ENCODE measurements at regions of chr10 and their contacts with region 1.

Region 1: GRCh38 chr10:3881636-3882035 is 96.6 kb upstream of the KLF6 start:
- DNase-seq: peak; percentile 74 to 80
- H3K4me3 ChIP-seq: no peak overlapping the region
- H3K4me3 Mint-ChIP-seq: peak overlapping the region; percentile 48
- H3K27ac Mint-ChIP-seq: peak overlapping the region; percentile 80
- H3K4me1 ChIP-seq: peaks cover 44% of the 10 kb centered on the region
- H3K4me1 Mint-ChIP-seq: peaks cover 48% of the 10 kb centered on the region
- H3K27me3 ChIP-seq: no peaks in the 10 kb centered on the region
- H3K27me3 Mint-ChIP-seq: no peaks in the 10 kb centered on the region
- CTCF ChIP-seq: no peak

Region 2: DNA sequence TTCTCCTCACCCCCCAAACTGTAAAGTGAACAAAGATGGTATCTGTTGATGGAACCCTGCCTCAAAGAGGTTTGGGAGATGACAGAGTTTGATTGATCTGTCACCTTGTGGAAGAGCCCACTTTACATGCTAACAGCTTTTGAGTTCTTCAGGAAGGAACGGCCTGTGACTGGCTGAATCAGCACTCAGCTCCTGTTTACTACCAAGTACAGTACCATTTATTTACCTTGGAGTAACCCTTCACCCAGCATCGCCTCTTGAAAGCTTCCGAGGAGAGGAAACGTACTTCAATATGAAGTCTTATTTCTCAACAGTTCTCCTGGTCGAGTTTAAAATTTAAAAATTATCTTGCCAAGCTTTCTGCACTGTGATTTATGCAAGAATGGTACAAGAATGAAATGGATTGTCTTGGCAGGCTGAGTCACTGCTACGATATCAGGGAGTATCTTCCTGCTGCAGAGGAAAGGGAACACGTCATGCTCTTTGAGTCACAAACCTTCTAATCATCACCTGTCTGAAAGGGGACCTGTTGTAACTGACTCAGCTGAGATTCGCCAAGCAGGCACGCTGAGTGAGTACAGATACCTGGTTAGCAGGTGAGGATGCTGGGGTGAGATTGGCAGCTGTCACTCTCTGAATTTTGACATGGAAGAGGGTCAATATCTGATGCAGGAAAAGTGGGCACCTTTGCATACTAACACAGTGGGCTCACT is 126.8 kb before region 1 on chr10:
- CTCF ChIA-PET with region 1: no interaction called
- POLR2A ChIA-PET with region 1: no interaction called
- intact Hi-C with region 1: loop called (anchors 2 kb)
- DNase-seq: peak; percentile 64 to 76
- H3K4me3 ChIP-seq: no peak overlapping the region
- H3K4me3 Mint-ChIP-seq: peak overlapping the region; percentile 60
- H3K27ac Mint-ChIP-seq: peak overlapping the region; percentile 91
- H3K4me1 ChIP-seq: peaks cover 64% of the 10 kb centered on the region
- H3K4me1 Mint-ChIP-seq: peaks cover 49% of the 10 kb centered on the region
- H3K27me3 ChIP-seq: no peaks in the 10 kb centered on the region
- H3K27me3 Mint-ChIP-seq: no peaks in the 10 kb centered on the region
- CTCF ChIP-seq: no peak

Region 3: DNA sequence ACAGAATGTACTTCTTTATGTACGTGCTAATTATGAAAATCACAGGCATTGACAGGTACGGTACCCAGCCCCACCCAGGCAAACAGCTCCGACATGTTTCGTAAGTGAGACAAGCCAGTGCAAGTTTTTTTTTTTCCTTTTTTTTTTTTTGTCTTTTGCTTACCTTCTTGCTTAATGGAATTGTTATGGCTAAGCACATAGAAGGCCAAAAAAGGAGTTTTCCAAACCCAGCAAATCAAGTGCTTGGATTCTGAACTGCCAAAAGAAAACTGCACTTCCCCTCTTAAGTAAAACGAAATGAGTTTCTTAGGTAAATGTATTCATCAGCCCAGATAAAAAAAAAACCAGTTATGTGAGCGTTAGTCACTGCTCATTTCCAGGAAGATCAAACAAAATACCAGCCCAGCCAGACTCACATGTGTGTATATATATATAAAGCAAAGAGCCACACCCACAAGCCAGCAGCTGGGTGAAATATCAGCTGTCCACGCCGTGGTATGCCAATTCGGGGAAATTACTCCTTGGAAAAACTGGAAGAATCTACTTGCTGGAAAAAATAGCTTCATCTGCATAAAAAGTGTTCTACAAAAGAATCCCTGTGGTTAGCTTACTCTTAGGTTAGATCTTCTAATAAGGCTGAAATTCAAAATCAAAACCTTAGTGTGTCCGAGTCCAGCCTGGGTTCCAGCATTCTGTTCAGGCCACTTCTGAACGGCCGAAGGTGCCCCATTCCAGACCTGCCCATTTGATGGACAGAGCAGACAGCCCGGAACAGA is 104.7 kb before region 1 on chr10:
- CTCF ChIA-PET with region 1: no interaction called
- POLR2A ChIA-PET with region 1: no interaction called
- intact Hi-C with region 1: no loop called
- DNase-seq: peak; percentile 80 to 84
- H3K4me3 ChIP-seq: no peak overlapping the region
- H3K4me3 Mint-ChIP-seq: peak overlapping the region; percentile 17
- H3K27ac Mint-ChIP-seq: peak overlapping the region; percentile 48
- H3K4me1 ChIP-seq: peaks cover 69% of the 10 kb centered on the region
- H3K4me1 Mint-ChIP-seq: peaks cover 47% of the 10 kb centered on the region
- H3K27me3 ChIP-seq: no peaks in the 10 kb centered on the region
- H3K27me3 Mint-ChIP-seq: no peaks in the 10 kb centered on the region
- CTCF ChIP-seq: no peak

Region 4: GRCh38 chr10:3902054-3902808 is 20.6 kb after region 1 on chr10:
- CTCF ChIA-PET with region 1: no interaction called
- POLR2A ChIA-PET with region 1: no interaction called
- intact Hi-C with region 1: no loop called
- DNase-seq: no peak
- H3K4me3 ChIP-seq: no peak overlapping the region
- H3K4me3 Mint-ChIP-seq: no peak overlapping the region
- H3K27ac Mint-ChIP-seq: no peak overlapping the region
- H3K4me1 ChIP-seq: peaks cover 7% of the 10 kb centered on the region
- H3K4me1 Mint-ChIP-seq: peaks cover 15% of the 10 kb centered on the region
- H3K27me3 ChIP-seq: no peaks in the 10 kb centered on the region
- H3K27me3 Mint-ChIP-seq: no peaks in the 10 kb centered on the region
- CTCF ChIP-seq: no peak

Region 5: GRCh38 chr10:4383651-4384098 is 502.0 kb after region 1 on chr10:
- CTCF ChIA-PET with region 1: no interaction called
- POLR2A ChIA-PET with region 1: no interaction called
- intact Hi-C with region 1: no loop called
- DNase-seq: no peak
- H3K4me3 ChIP-seq: no peak overlapping the region
- H3K4me3 Mint-ChIP-seq: no peak overlapping the region
- H3K27ac Mint-ChIP-seq: no peak overlapping the region
- H3K4me1 ChIP-seq: no peaks in the 10 kb centered on the region
- H3K4me1 Mint-ChIP-seq: no peaks in the 10 kb centered on the region
- H3K27me3 ChIP-seq: no peaks in the 10 kb centered on the region
- H3K27me3 Mint-ChIP-seq: peaks cover 9% of the 10 kb centered on the region
- CTCF ChIP-seq: no peak

Measured in Caco-2 (cell line).